OCI-LY7 (cell line): ENCODE measurements at regions of chrX and their contacts with region 1.

Region 1: DNA sequence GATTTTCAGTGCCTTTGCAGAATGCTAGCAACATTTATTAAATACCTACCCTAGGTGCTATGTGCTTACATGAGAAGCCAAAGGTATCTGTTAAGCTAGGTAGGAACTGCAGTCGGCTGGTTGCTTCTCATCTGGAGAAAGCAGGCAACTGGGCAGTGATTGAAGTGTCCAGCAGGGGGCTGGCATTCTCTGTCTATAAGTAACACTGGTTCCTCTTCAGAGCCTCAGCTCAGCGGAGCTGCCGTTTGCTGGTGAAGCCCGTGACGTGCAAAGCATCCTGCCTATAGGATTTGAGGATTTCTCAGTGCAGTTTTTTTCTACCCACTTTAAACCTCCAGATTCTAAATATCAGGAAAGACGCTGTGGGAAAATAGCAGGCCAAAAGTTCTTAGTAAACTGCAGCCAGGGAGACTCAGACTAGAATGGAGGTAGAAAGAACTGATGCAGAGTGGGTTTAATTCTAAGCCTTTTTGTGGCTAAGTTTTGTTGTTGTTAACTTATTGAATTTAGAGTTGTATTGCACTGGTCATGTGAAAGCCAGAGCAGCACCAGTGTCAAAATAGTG is at the start of gene GRPR:
- DNase-seq: peak; percentile 89
- H3K4me3 ChIP-seq: no peak within 1 kb of the TSS
- H3K27ac ChIP-seq: peak within 1 kb of the TSS; percentile 13
- H3K4me1 ChIP-seq: peaks cover 82% of the 10 kb centered on the region
- CTCF ChIP-seq: peak; percentile 78
- total RNA-seq, gene GRPR: 0.47 TPM in 1 of 2 replicates, not detected in the other

Region 2: GRCh38 chrX:16103625-16104024 is 19.7 kb before region 1 on chrX:
- CTCF ChIA-PET with region 1: no interaction called
- POLR2A ChIA-PET with region 1: interaction called, 4 read pairs
- intact Hi-C with region 1: loop called (anchors 1 kb)
- DNase-seq: no peak
- H3K4me3 ChIP-seq: peak overlapping the region; percentile 30
- H3K27ac ChIP-seq: peak overlapping the region; percentile 96
- H3K4me1 ChIP-seq: peaks cover 61% of the 10 kb centered on the region
- CTCF ChIP-seq: no peak